IMR-90 (cell line): ENCODE measurements at regions of chr17 and their contacts with region 1.

Region 1: DNA sequence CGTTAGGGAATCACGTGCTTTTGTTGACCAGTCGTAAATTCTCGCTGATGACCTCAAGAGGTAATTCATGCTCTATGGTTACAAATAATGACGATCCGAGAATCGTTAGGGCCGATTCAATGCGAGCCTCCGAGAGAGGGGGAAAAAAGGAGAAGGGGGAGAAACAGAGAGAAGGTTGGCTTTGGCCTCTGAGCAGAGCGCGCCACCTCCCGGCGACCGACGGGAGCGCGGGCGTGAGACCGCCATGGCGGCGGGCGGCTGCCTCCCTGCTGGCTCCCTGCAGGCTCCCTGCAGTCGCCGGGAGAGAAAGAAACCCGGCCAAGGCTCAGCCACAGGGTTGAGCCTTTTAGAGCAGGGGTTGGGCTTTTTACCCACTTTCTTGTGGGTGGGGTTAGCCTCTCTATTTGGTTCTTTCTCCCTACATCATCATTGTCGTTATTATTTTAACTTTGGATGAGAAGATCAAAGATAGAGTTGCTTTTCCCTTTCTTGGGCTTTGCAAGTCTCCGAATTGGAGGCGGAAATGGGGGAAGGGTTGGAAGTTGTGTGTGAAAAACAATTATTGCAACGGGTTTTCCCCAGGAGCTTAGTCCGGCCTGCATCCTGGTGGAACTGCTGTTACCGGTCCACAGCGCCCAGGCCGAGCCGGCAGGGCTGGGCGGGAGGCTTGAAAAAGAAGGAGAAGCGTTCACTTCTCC is 410 bp upstream of the HOXB5 start:
- DNase-seq: peak; percentile 99
- ATAC-seq: peak; percentile 48
- H3K4me3 ChIP-seq: peak overlapping the region; percentile 91
- H3K27ac ChIP-seq: peak overlapping the region; percentile 96
- H3K4me1 ChIP-seq: peaks cover 12% of the 10 kb centered on the region
- H3K27me3 ChIP-seq: no peaks in the 10 kb centered on the region
- CTCF ChIP-seq: peak; percentile 98
- POLR2A ChIP-seq: peak; percentile 67
- RAD21 ChIP-seq: peak; percentile 93

Region 2: DNA sequence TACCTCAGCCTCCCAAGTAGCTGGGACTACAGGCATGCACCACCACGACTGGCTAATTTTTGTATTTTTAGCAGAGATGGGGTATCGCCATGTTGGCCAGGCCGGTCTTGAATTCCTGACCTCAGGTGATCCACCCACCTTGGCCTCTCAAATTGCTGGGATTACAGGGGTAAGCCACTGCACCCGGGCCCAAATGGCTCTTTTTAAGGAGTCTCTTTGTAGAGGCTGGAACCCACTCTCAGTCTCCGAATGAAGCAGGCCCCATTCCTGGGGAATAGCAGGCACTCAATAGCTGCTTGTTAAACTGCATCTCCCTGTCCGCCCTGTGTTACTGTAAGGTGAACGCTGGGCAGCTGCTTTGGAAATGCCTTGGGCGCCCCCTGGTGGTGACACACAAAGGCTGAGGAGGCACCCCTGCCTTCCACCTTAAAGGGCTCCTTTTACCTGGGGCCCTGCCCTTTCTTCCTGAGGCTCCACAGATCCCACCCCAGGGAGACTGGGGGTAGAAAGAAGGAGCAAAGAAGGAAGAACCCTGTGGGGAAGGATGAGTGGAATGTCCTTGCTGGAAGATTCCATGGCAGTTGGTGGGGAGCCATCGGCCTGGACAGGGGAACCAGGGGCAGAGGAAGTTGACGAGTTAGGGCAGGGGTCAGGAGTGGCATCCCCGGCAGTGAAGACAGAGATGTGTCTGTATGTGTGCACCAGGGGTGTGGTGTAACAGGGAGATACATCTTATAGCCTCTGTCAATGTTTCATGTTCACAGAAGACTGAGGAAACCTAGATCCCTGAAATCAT is 704.1 kb before region 1 on chr17:
- CTCF ChIA-PET with region 1: no interaction called
- POLR2A ChIA-PET with region 1: no interaction called
- dilution Hi-C with region 1: no loop called
- in situ Hi-C with region 1: no loop called
- intact Hi-C with region 1: no loop called
- DNase-seq: peak; percentile 77
- ATAC-seq: peak; percentile 99
- H3K4me3 ChIP-seq: no peak overlapping the region
- H3K27ac ChIP-seq: no peak overlapping the region
- H3K4me1 ChIP-seq: no peaks in the 10 kb centered on the region
- H3K27me3 ChIP-seq: peaks cover under 1% of the 10 kb centered on the region; the same call in 1 of the 2 replicates
- CTCF ChIP-seq: peak; percentile 96
- POLR2A ChIP-seq: peak; percentile 54
- RAD21 ChIP-seq: peak; percentile 99

Region 3: DNA sequence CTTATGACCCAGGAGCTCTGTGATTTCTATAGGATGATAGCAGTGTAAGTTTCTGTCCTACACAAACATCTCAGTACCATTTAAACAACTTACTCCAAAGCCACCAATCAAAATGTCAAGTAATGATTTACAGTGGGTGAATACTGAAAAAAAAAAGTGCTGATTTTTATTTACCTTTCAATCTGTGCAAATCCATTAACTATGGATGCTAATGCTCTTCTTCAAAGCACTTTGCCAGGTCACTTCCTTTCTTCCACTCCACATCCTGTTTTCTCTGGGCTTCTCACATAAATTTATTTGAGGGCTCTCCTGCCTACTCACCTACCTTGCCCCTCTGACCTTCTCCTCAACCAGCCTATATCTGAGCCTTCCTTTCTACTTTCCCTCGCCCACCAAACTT is 265.5 kb before region 1 on chr17:
- CTCF ChIA-PET with region 1: no interaction called
- POLR2A ChIA-PET with region 1: interaction called, 12 read pairs
- dilution Hi-C with region 1: no loop called
- in situ Hi-C with region 1: no loop called
- intact Hi-C with region 1: no loop called
- DNase-seq: no peak
- ATAC-seq: no peak
- H3K4me3 ChIP-seq: no peak overlapping the region
- H3K27ac ChIP-seq: no peak overlapping the region
- H3K4me1 ChIP-seq: no peaks in the 10 kb centered on the region
- H3K27me3 ChIP-seq: peaks cover 51% of the 10 kb centered on the region
- CTCF ChIP-seq: no peak
- POLR2A ChIP-seq: no peak
- RAD21 ChIP-seq: no peak

Region 4: DNA sequence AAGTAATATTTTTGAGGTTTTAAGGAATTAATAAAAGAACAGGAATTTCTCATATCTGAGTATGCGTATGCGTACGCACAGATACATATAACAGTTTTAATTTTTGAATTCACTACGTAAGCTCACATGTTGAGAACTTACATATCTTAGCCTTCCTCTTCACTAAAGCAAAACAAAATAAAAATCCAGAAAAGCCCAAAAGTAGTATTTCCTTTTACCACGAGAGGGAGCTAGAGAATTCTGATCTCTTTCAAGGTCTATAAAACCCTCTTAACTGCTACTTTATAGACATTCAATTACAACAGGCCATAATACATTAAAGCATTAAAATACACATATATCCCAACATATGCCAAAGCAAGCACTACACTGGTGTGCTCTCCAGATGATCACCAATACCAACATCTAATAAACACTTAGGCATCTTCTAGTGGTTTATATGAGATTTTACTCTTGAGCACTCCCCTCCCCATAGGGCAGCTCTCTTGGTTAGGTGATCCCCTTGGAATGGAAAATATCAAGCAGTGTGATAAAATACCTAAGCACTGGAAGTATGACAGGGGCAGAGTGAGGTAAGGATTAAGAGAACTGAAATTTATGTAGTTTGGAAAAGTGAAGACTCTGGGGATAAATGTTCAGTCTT is 258.0 kb before region 1 on chr17:
- CTCF ChIA-PET with region 1: interaction called, 3 read pairs
- POLR2A ChIA-PET with region 1: interaction called, 10 read pairs
- dilution Hi-C with region 1: no loop called
- in situ Hi-C with region 1: loop called (anchors 5 kb)
- intact Hi-C with region 1: loop called (anchors 1 kb)
- DNase-seq: peak; percentile 71
- ATAC-seq: peak; percentile 74
- H3K4me3 ChIP-seq: no peak overlapping the region
- H3K27ac ChIP-seq: no peak overlapping the region
- H3K4me1 ChIP-seq: 0 out of 2 replicates have a peak, but pooled peaks cover 1% of the 10 kb centered on the region
- H3K27me3 ChIP-seq: peaks cover 40% of the 10 kb centered on the region
- CTCF ChIP-seq: peak; percentile 82
- POLR2A ChIP-seq: no peak
- RAD21 ChIP-seq: peak; percentile 73

Region 5: GRCh38 chr17:48483471-48484131 is 110.4 kb before region 1 on chr17:
- CTCF ChIA-PET with region 1: interaction called, 5 read pairs
- POLR2A ChIA-PET with region 1: interaction called, 14 read pairs
- dilution Hi-C with region 1: no loop called
- in situ Hi-C with region 1: no loop called
- intact Hi-C with region 1: no loop called
- DNase-seq: peak; percentile 100
- ATAC-seq: peak; percentile 75
- H3K4me3 ChIP-seq: no peak overlapping the region
- H3K27ac ChIP-seq: peak overlapping the region; percentile 86
- H3K4me1 ChIP-seq: peaks cover 19% of the 10 kb centered on the region
- H3K27me3 ChIP-seq: no peaks in the 10 kb centered on the region
- CTCF ChIP-seq: no peak
- POLR2A ChIP-seq: no peak; the same call in 1 of the 2 replicates
- RAD21 ChIP-seq: peak; percentile 5; the same call in 1 of the 2 replicates

Region 6: DNA sequence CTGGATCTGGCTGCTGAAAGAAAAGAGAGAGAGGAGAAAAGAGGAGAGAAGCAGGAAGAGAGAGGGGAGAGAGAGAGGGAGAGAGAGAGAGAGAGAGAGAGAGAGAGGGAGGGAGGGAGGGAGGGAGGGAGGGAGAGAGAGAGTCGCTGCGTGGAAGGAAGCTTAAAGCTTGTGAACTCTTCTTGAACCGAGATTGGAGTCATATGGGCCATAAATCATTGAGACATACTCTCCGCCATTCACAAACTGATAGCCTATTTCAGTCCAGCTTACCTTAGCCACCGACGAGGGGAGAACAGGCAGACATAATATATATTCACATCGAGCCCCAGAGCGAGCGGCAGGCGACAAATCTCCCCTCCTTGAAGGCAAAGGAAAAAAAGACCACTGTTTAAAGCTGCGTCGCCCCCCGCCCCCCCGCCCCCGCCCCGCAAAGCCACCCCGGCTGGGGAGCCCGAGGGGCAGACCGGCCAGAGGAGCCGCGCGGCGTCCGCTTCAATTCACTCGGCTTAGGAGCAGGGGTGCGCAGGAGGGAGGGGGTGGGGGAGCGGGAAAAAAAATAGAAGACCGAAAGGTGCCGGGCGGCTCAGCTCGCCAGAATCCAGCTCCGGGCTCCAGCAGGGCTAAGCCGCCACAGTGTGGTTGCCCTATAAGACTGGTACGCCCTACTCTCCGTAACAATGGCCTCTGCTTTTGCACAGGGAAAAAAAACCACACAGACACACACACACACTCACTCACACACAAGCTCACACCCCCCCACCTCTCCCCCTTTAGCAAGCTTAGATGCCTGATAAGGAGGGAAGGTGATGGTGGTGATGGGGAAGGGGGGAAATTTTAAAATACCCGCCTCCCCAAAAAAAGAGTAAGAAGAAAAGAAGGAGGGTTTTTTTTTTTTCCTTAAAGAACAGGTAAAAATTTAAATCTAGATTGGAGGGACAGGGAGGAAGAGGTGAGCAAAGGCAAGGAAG is 38.4 kb before region 1 on chr17:
- CTCF ChIA-PET with region 1: interaction called, 4 read pairs
- POLR2A ChIA-PET with region 1: interaction called, 25 read pairs
- dilution Hi-C with region 1: no loop called
- in situ Hi-C with region 1: no loop called
- intact Hi-C with region 1: no loop called
- DNase-seq: peak; percentile 99
- ATAC-seq: peak; percentile 22
- H3K4me3 ChIP-seq: peak overlapping the region; percentile 48
- H3K27ac ChIP-seq: peak overlapping the region; percentile 93
- H3K4me1 ChIP-seq: peaks cover 56% of the 10 kb centered on the region
- H3K27me3 ChIP-seq: no peaks in the 10 kb centered on the region
- CTCF ChIP-seq: 0 out of 2 replicates have a peak, but pooled peaks have one; percentile 4
- POLR2A ChIP-seq: no peak
- RAD21 ChIP-seq: no peak; the same call in 1 of the 2 replicates

Region 7: GRCh38 chr17:48575673-48576478 is 18.1 kb before region 1 on chr17:
- CTCF ChIA-PET with region 1: no interaction called
- POLR2A ChIA-PET with region 1: interaction called, 9 read pairs
- dilution Hi-C with region 1: no loop called
- in situ Hi-C with region 1: no loop called
- intact Hi-C with region 1: loop called (anchors 2 kb)
- DNase-seq: peak; percentile 67
- ATAC-seq: no peak
- H3K4me3 ChIP-seq: peak overlapping the region; percentile 40
- H3K27ac ChIP-seq: peak overlapping the region; percentile 99
- H3K4me1 ChIP-seq: peaks cover 20% of the 10 kb centered on the region
- H3K27me3 ChIP-seq: no peaks in the 10 kb centered on the region
- CTCF ChIP-seq: no peak
- POLR2A ChIP-seq: 0 out of 2 replicates have a peak, but pooled peaks have one; percentile 27
- RAD21 ChIP-seq: no peak

Region 8: GRCh38 chr17:48610282-48611211 is 16.6 kb after region 1 on chr17 and contains the start of gene HOXB7:
- CTCF ChIA-PET with region 1: interaction called, 5 read pairs
- POLR2A ChIA-PET with region 1: interaction called, 5 read pairs
- dilution Hi-C with region 1: no loop called
- in situ Hi-C with region 1: no loop called
- intact Hi-C with region 1: loop called (anchors 1 kb)
- DNase-seq: peak; percentile 62
- ATAC-seq: peak; percentile 50
- H3K4me3 ChIP-seq: peak within 1 kb of the TSS; percentile 63
- H3K27ac ChIP-seq: peak within 1 kb of the TSS; percentile 93
- H3K4me1 ChIP-seq: peaks cover 14% of the 10 kb centered on the region
- H3K27me3 ChIP-seq: peaks cover 4% of the 10 kb centered on the region
- CTCF ChIP-seq: no peak
- POLR2A ChIP-seq: no peak
- RAD21 ChIP-seq: no peak
- total RNA-seq, gene HOXB7: 1.8 and 3.3 TPM in 2 replicates